Activated CD4-positive, alpha-beta memory T cell treated with anti-CD3 and anti-CD28 coated beads for 36 hours (primary cell): ENCODE measurements at regions of chr17 and their contacts with region 1.

Region 1: GRCh38 chr17:27293898-27294688 is at the start of gene WSB1:
- DNase-seq: peak; percentile 94
- H3K4me3 Mint-ChIP-seq: peak within 1 kb of the TSS; percentile 99
- H3K27ac Mint-ChIP-seq: peak within 1 kb of the TSS; percentile 100
- H3K4me1 Mint-ChIP-seq: peaks cover 39% of the 10 kb centered on the region
- H3K27me3 Mint-ChIP-seq: no peaks in the 10 kb centered on the region
- total RNA-seq, gene WSB1: 135 to 147 TPM

Region 2: GRCh38 chr17:26809033-26809432 is 485.1 kb before region 1 on chr17:
- CTCF ChIA-PET with region 1: no interaction called
- POLR2A ChIA-PET with region 1: no interaction called
- intact Hi-C with region 1: no loop called
- DNase-seq: no peak
- H3K4me3 Mint-ChIP-seq: no peak overlapping the region
- H3K27ac Mint-ChIP-seq: no peak overlapping the region
- H3K4me1 Mint-ChIP-seq: no peaks in the 10 kb centered on the region
- H3K27me3 Mint-ChIP-seq: no peaks in the 10 kb centered on the region

Region 3: GRCh38 chr17:27245230-27245696 is 48.8 kb before region 1 on chr17:
- CTCF ChIA-PET with region 1: interaction called, 3 read pairs
- POLR2A ChIA-PET with region 1: interaction called, 12 read pairs
- intact Hi-C with region 1: no loop called
- DNase-seq: peak; percentile 70
- H3K4me3 Mint-ChIP-seq: no peak overlapping the region
- H3K27ac Mint-ChIP-seq: no peak overlapping the region
- H3K4me1 Mint-ChIP-seq: peaks cover 6% of the 10 kb centered on the region
- H3K27me3 Mint-ChIP-seq: peaks cover 8% of the 10 kb centered on the region

Region 4: GRCh38 chr17:27353461-27354050 is 59.5 kb after region 1 on chr17:
- CTCF ChIA-PET with region 1: interaction called, 7 read pairs
- POLR2A ChIA-PET with region 1: no interaction called
- intact Hi-C with region 1: loop called (anchors 5 kb)
- DNase-seq: peak; percentile 93
- H3K4me3 Mint-ChIP-seq: peak overlapping the region; percentile 78
- H3K27ac Mint-ChIP-seq: peak overlapping the region; percentile 86
- H3K4me1 Mint-ChIP-seq: peaks cover 22% of the 10 kb centered on the region
- H3K27me3 Mint-ChIP-seq: no peaks in the 10 kb centered on the region

Region 5: GRCh38 chr17:27403480-27404005 is 109.5 kb after region 1 on chr17:
- CTCF ChIA-PET with region 1: no interaction called
- POLR2A ChIA-PET with region 1: no interaction called
- intact Hi-C with region 1: no loop called
- DNase-seq: no peak
- H3K4me3 Mint-ChIP-seq: no peak overlapping the region
- H3K27ac Mint-ChIP-seq: no peak overlapping the region
- H3K4me1 Mint-ChIP-seq: no peaks in the 10 kb centered on the region
- H3K27me3 Mint-ChIP-seq: no peaks in the 10 kb centered on the region